Calu3 (cell line): ENCODE measurements at regions of chr9 and their contacts with region 1.

Region 1: GRCh38 chr9:100598641-100599145 is 20.8 kb downstream of the CAVIN4 start:
- DNase-seq: peak; percentile 87
- H3K4me3 Mint-ChIP-seq: peak overlapping the region; percentile 48
- H3K27ac Mint-ChIP-seq: no peak overlapping the region
- H3K4me1 Mint-ChIP-seq: peaks cover 21% of the 10 kb centered on the region
- H3K27me3 Mint-ChIP-seq: no peaks in the 10 kb centered on the region
- CTCF ChIP-seq: no peak

Region 2: GRCh38 chr9:100322954-100323536 is 275.6 kb before region 1 on chr9:
- CTCF ChIA-PET with region 1: no interaction called
- intact Hi-C with region 1: loop called (anchors 5 kb)
- DNase-seq: peak; percentile 2
- H3K4me3 Mint-ChIP-seq: no peak overlapping the region
- H3K27ac Mint-ChIP-seq: no peak overlapping the region
- H3K4me1 Mint-ChIP-seq: no peaks in the 10 kb centered on the region
- H3K27me3 Mint-ChIP-seq: no peaks in the 10 kb centered on the region
- CTCF ChIP-seq: peak; percentile 16

Region 3: DNA sequence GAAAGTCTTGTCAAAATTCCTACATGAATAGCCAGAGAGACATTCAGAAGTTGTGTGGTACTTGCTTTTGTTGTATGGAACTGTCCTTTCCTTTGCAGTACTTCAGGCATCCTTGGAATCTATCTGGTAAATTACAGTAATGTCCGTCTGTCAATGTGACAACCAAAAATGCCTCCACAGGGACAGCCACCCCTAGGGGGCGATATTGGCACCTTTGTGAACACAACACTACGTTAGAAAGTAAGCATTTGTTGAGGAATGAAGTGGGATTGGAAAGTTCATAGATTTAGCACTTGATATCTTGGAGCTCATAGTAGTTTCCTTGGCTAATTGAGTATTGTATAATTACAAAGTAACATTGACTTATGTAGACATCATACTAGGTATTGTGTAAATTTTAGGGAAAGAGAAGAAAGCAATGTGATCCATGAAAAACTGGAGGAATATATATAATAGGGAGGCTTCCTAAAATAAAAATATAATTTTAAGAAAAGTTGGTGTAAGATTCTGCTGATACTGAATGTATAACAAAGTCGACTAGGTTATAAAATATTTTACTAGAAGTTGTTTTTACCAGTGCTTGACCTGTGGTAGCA is 93.0 kb before region 1 on chr9:
- CTCF ChIA-PET with region 1: no interaction called
- intact Hi-C with region 1: loop called (anchors 1 kb)
- DNase-seq: peak; percentile 81
- H3K4me3 Mint-ChIP-seq: no peak overlapping the region
- H3K27ac Mint-ChIP-seq: no peak overlapping the region
- H3K4me1 Mint-ChIP-seq: no peaks in the 10 kb centered on the region
- H3K27me3 Mint-ChIP-seq: no peaks in the 10 kb centered on the region
- CTCF ChIP-seq: peak; percentile 45

Region 4: DNA sequence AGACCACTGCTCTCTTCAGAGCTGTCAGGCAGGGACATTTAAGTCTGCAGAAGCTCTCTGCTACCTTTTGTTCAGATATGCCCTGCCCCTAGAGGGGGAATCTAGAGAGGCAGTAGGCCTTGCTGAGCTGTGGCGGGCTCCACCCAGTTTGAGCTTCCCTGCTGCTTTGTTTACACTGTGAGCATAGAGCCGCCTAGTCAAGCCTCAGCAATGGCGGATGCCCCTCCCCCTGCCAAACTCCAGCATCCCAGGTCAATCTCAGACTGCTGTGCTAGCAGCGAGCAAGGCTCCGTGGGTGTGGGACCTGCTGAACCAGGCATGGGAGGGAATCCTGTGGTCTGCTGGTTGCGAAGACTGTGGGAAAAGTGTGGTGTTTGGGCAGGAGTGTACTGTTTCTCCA is 39.1 kb after region 1 on chr9:
- CTCF ChIA-PET with region 1: no interaction called
- intact Hi-C with region 1: no loop called
- DNase-seq: peak; percentile 2
- H3K4me3 Mint-ChIP-seq: no peak overlapping the region
- H3K27ac Mint-ChIP-seq: no peak overlapping the region
- H3K4me1 Mint-ChIP-seq: no peaks in the 10 kb centered on the region
- H3K27me3 Mint-ChIP-seq: peaks cover 46% of the 10 kb centered on the region
- CTCF ChIP-seq: no peak

Region 5: GRCh38 chr9:100700689-100701318 is 102.1 kb after region 1 on chr9:
- CTCF ChIA-PET with region 1: no interaction called
- intact Hi-C with region 1: loop called (anchors 5 kb)
- DNase-seq: peak; percentile 16
- H3K4me3 Mint-ChIP-seq: no peak overlapping the region
- H3K27ac Mint-ChIP-seq: no peak overlapping the region
- H3K4me1 Mint-ChIP-seq: peaks cover 8% of the 10 kb centered on the region
- H3K27me3 Mint-ChIP-seq: no peaks in the 10 kb centered on the region
- CTCF ChIP-seq: no peak

Region 6: GRCh38 chr9:101311758-101312420 is 713.2 kb after region 1 on chr9:
- CTCF ChIA-PET with region 1: interaction called, 24 read pairs
- intact Hi-C with region 1: loop called (anchors 1 kb)
- DNase-seq: peak; percentile 15
- H3K4me3 Mint-ChIP-seq: no peak overlapping the region
- H3K27ac Mint-ChIP-seq: no peak overlapping the region
- H3K4me1 Mint-ChIP-seq: peaks cover 18% of the 10 kb centered on the region
- H3K27me3 Mint-ChIP-seq: peaks cover 14% of the 10 kb centered on the region
- CTCF ChIP-seq: peak; percentile 45

Region 7: GRCh38 chr9:101387871-101388506 is 789.3 kb after region 1 on chr9:
- CTCF ChIA-PET with region 1: no interaction called
- intact Hi-C with region 1: loop called (anchors 5 kb)
- DNase-seq: peak; percentile 34
- H3K4me3 Mint-ChIP-seq: no peak overlapping the region
- H3K27ac Mint-ChIP-seq: peak overlapping the region; percentile 69
- H3K4me1 Mint-ChIP-seq: peaks cover 38% of the 10 kb centered on the region
- H3K27me3 Mint-ChIP-seq: no peaks in the 10 kb centered on the region
- CTCF ChIP-seq: peak; percentile 19